ENCODE measurements at regions of chr1 and their contacts with region 1.

Region 1: DNA sequence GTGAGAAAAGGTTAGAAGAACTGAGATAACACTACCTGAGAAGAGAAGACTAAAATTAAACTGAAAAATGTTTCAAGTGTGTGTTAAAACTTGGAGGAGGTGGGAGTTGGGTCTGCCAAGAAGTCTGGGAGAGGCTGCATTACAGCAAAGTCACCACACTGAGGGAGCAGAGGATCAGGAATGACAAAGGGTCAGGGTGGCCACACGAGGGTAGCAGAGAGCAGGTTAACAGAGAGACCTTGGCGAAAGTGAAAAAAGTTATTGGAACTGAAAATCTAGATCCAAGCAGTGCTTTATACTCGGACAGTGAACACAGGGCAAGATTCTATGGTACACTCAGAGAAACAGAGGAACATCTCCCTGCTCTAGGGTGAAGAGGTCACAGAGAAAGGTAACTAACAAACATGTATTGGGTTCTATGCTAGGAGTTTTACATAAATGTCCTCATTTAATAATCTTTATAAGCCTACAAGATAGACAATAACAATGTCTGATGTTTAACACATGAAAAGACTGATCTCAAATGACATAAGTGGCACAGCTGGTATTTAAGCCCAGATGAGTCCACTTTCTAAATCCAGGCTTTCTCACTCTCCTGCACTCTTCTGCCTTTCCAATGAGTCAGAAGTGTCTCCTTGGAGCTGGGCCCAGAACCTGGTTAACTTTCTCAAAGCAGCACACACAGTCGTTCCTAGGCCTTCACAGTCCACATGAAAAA is 10.3 kb upstream of the CADM3 start:
- DNase-seq: peak; percentile 50 to 69
- ATAC-seq: peak; percentile 94 to 98 (median 96)
- H3K4me3 ChIP-seq: no peak overlapping the region
- H3K27ac ChIP-seq: peak overlapping the region in 1 of 10 donors; percentile 55
- H3K4me1 ChIP-seq: peaks cover 0 to 11% (median 0%) of the 10 kb centered on the region in 9 donors
- H3K27me3 ChIP-seq: peaks cover 0 to 47% (median 17%) of the 10 kb centered on the region in 7 donors
- CTCF ChIP-seq: peak; percentile 74 to 98 (median 91)

Region 2: DNA sequence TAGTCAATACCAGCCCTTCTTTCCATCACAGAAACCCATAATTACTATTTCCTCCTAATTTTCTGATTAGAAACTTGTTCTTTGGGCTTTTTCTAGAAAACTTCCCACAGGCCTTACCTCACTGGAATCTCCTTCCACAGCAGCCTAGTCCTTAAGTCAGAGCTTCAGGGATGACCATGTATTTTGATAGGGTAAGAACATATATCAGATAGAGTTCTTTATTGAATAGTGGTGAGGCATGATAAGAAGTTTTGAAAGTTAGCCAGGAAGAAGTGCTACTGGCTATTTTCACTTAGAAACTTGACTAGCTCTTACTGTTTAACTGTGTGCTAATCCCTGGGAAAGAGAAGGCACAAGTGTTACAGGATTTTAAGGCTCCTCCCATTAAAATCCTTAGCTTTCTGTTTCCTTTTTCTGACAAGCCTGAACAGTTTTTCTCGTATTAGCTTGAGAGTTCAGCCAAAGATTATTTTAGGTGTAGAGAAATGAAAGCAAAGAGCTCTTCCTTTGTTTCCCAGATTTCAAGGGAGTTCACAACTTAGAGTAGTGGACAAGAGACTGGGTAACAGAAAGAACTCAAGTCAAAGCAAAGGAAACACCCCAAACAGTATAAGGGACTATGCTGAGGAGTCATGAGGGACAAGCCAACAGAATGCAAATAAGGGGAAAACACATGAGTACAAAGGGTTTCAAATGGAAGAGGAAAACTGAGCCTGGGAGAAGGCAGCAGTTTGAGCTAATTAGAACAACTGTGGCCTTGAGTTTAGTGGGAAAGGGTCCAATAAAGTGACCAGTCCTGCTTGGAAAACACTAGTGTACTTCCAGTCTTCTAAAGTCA is 47.3 kb before region 1 on chr1:
- intact Hi-C with region 1: no loop called
- DNase-seq: no peak
- ATAC-seq: no peak
- H3K4me3 ChIP-seq: no peak overlapping the region
- H3K27ac ChIP-seq: peak overlapping the region in 3 of 10 donors; percentile 22 to 71 (median 26)
- H3K4me1 ChIP-seq: peaks cover 0 to 9% (median 0%) of the 10 kb centered on the region in 9 donors
- H3K27me3 ChIP-seq: no peaks in the 10 kb centered on the region
- CTCF ChIP-seq: no peak

Region 3: GRCh38 chr1:159197561-159198557 is 36.7 kb after region 1 on chr1:
- intact Hi-C with region 1: loop called in 9 of 10 experiments (anchors 2 to 5 kb)
- DNase-seq: peak; percentile 31 to 69
- ATAC-seq: peak; percentile 55 to 85 (median 66)
- H3K4me3 ChIP-seq: no peak overlapping the region
- H3K27ac ChIP-seq: no peak overlapping the region
- H3K4me1 ChIP-seq: no peaks in the 10 kb centered on the region
- H3K27me3 ChIP-seq: peaks cover 0 to 38% (median 19%) of the 10 kb centered on the region in 7 donors
- CTCF ChIP-seq: peak; percentile 55 to 81 (median 78)

Region 4: GRCh38 chr1:159214149-159214760 is 53.1 kb after region 1 on chr1:
- intact Hi-C with region 1: loop called in 9 of 10 experiments (anchors 1 to 5 kb)
- DNase-seq: peak in 1 of 2 donors; percentile 22
- ATAC-seq: peak in 1 of 8 donors; percentile 69
- H3K4me3 ChIP-seq: no peak overlapping the region
- H3K27ac ChIP-seq: no peak overlapping the region
- H3K4me1 ChIP-seq: peaks cover 0 to 14% (median 8%) of the 10 kb centered on the region in 9 donors
- H3K27me3 ChIP-seq: peaks cover 0 to 65% (median 34%) of the 10 kb centered on the region in 7 donors
- CTCF ChIP-seq: peak; percentile 78 to 95 (median 89)

Region 5: DNA sequence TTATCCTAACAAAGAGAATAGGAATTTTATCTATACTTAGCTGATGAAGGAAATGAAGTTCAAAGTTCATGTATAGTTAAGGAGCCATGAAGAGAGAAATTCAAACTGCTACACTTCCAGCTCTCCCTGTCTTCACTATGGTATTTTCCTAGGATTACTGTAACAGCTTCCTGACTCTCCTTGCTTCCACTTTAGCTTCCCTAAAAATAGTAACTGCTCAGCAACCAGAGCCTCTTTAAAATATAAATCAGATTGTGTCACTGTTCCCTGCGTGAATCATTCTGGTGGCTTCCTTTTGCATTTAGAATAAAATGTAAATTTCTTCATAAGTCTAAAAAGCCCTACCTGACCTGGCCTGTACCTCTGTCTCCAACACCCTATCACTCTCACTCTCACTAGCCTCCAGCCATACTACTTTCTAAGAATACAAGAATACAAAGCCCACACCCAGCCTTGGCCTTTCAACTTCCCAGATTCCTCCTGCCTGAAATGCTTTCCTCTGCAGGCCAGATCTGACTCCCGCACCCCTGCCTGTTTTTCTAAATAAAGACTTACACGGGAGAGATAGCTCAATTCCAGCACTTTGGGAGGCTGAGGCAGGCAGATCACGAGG is 308.9 kb after region 1 on chr1:
- intact Hi-C with region 1: no loop called
- DNase-seq: no peak
- ATAC-seq: peak in 1 of 8 donors; percentile 56
- H3K4me3 ChIP-seq: no peak overlapping the region
- H3K27ac ChIP-seq: peak overlapping the region in 3 of 10 donors; percentile 12 to 29 (median 29)
- H3K4me1 ChIP-seq: peaks cover 0 to 10% (median 0%) of the 10 kb centered on the region in 9 donors
- H3K27me3 ChIP-seq: no peaks in the 10 kb centered on the region
- CTCF ChIP-seq: no peak

Measured in heart right ventricle (tissue), 16 donors.